ENCODE measurements at regions of chr1 and their contacts with region 1.

Region 1: GRCh38 chr1:9494929-9495758 is 44.1 kb upstream of the SLC25A33 start:
- DNase-seq: peak; percentile 69
- H3K4me3 Mint-ChIP-seq: peak overlapping the region; percentile 68
- H3K27ac Mint-ChIP-seq: no peak overlapping the region
- H3K4me1 Mint-ChIP-seq: peaks cover 3% of the 10 kb centered on the region
- H3K27me3 Mint-ChIP-seq: peaks cover 2% of the 10 kb centered on the region

Region 2: DNA sequence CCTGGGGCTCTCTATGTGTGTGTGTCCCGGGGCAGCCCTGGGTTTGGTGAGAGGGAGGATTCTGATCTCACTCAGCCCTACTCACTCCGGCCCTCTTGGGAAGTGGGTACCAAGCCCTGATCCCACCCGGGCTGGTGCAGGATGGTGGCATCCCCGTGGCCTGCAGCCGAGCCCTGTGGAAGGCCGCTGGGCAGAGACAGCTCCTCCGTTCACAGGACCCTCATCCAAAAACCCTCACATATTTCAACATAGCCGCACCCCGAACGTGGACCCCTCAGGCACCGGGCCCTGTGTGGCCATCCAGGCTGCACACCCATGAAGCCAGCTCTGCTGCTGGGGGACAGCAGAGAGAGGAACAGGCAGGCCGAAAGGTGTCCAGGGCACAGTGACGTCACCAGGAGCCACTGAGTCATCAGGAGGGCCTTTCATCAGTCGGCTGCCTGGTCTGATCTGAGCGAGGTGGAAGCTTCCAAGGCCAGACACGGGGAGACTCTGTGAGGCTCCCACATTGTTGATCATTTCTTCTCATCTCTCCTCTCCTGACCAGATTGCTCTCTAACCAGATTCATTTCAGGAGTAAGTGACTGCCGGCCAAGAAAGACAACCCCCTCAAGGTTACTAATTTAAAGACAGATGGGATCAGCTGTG is 350.0 kb before region 1 on chr1:
- CTCF ChIA-PET with region 1: no interaction called
- intact Hi-C with region 1: loop called (anchors 1 kb)
- DNase-seq: no peak
- H3K4me3 Mint-ChIP-seq: no peak overlapping the region
- H3K27ac Mint-ChIP-seq: no peak overlapping the region
- H3K4me1 Mint-ChIP-seq: no peaks in the 10 kb centered on the region
- H3K27me3 Mint-ChIP-seq: no peaks in the 10 kb centered on the region

Region 3: DNA sequence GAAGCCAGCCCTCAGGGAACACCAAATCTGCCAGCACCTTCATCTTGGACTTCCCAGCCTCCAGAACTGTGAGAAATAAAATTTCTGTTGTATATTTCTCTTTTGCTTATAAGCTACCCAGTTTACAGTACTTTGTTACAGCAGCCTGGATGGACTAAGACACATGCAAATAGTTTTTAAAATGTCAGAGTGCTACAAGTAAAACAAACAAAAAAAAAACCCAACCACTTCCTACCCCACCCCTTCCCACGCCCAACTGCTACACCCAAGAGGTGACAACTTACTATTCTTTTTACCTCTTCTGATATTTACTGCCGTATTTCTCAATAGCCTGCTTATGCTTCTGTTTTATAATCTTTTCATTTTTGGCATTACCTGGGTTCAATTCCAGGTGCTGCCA is 211.1 kb before region 1 on chr1:
- CTCF ChIA-PET with region 1: interaction called, 64 read pairs
- intact Hi-C with region 1: loop called (anchors 1 kb)
- DNase-seq: no peak
- H3K4me3 Mint-ChIP-seq: no peak overlapping the region
- H3K27ac Mint-ChIP-seq: no peak overlapping the region
- H3K4me1 Mint-ChIP-seq: peaks cover 29% of the 10 kb centered on the region
- H3K27me3 Mint-ChIP-seq: no peaks in the 10 kb centered on the region

Region 4: GRCh38 chr1:9388335-9389180 is 106.6 kb before region 1 on chr1:
- CTCF ChIA-PET with region 1: no interaction called
- intact Hi-C with region 1: no loop called
- DNase-seq: no peak
- H3K4me3 Mint-ChIP-seq: no peak overlapping the region
- H3K27ac Mint-ChIP-seq: no peak overlapping the region
- H3K4me1 Mint-ChIP-seq: peaks cover 5% of the 10 kb centered on the region
- H3K27me3 Mint-ChIP-seq: no peaks in the 10 kb centered on the region

Region 5: GRCh38 chr1:9539165-9539828 is 44.2 kb after region 1 on chr1 and contains the start of gene SLC25A33:
- CTCF ChIA-PET with region 1: interaction called, 8 read pairs
- intact Hi-C with region 1: loop called (anchors 1 kb)
- DNase-seq: peak; percentile 99
- H3K4me3 Mint-ChIP-seq: peak within 1 kb of the TSS; percentile 92
- H3K27ac Mint-ChIP-seq: peak within 1 kb of the TSS; percentile 74
- H3K4me1 Mint-ChIP-seq: peaks cover 32% of the 10 kb centered on the region
- H3K27me3 Mint-ChIP-seq: no peaks in the 10 kb centered on the region
- total RNA-seq, gene SLC25A33: 4.7 to 5.2 TPM

Region 6: DNA sequence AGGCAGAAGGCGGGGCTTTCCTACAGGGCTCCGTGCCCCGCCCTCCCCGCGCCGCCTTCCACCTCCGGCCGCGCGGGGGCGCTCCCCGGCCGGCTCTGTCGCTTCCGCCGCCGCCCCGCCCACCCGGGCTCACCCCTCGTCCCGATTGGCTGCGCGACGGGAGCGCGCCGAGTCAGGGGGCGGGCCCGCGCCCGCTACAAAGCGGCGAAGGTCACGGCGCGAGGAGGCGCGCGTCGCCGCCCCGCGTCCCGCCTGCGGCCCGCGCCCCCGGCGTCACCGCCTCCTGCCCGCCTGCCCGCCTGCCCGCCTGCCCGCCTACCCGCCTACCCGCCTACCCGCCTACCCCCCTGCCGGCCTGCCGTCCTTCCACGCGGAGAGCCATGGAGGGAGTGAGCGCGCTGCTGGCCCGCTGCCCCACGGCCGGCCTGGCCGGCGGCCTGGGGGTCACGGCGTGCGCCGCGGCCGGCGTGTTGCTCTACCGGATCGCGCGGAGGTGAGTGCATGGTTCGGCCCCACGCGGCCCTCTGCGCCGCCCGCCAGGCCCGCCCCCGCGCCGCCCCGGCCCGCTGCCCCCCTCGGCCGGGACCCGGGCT is 93.5 kb after region 1 on chr1 and contains the start of gene TMEM201:
- CTCF ChIA-PET with region 1: interaction called, 3 read pairs
- intact Hi-C with region 1: loop called (anchors 1 kb)
- DNase-seq: peak; percentile 92
- H3K4me3 Mint-ChIP-seq: peak within 1 kb of the TSS; percentile 78
- H3K27ac Mint-ChIP-seq: no peak within 1 kb of the TSS
- H3K4me1 Mint-ChIP-seq: peaks cover 38% of the 10 kb centered on the region
- H3K27me3 Mint-ChIP-seq: no peaks in the 10 kb centered on the region
- total RNA-seq, gene TMEM201: 9.1 to 9.8 TPM